CD8-positive, alpha-beta T cell (primary cell): ENCODE measurements at regions of chr19 and their contacts with region 1.

Region 1: DNA sequence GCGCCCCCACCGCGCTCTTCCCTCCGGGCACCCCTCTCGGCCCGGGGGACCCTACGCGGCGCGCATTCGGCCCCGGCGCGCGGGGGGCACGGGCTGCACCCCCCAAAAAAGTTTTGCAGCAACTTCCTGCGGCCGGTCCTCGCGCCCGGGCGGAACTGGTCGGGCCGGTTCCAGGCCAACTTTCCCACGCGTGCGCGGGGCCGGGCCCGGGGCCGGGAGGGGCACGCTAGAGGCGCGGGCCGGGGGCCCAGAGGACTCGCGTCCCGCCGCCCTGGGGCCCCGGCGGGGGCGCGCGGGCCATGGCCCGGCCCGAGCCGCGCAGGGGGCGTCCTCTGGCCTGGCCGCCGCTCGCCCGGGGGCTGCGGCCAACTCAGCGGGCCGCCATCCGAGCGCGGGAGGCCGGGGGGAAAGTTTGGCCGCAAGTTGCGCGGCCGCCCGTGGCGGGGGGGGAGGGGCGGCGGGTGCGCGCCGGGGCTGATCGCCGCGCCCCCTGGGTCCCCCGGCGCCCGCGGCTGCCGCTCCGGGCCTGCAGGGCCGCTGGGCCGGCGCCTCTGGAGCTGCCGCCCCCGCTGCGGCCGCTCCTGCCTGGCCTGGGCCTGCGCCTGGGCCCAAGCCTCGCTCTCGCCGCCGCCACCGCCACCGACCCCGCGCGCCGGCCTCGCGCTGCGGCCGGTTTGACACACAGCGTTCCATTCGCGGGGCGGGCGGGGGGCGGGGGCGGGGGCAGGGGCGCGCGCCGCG is at the start of gene NR2F6:
- DNase-seq: no peak
- ATAC-seq: peak; percentile 10
- H3K4me3 ChIP-seq: peak within 1 kb of the TSS; percentile 62 to 76
- H3K4me3 Mint-ChIP-seq: peak within 1 kb of the TSS; percentile 85
- H3K27ac ChIP-seq: no peak within 1 kb of the TSS
- H3K27ac Mint-ChIP-seq: peak within 1 kb of the TSS; percentile 41
- H3K4me1 ChIP-seq: peaks cover 9% of the 10 kb centered on the region
- H3K4me1 Mint-ChIP-seq: peaks cover 4% of the 10 kb centered on the region
- H3K27me3 ChIP-seq: no peaks in the 10 kb centered on the region
- H3K27me3 Mint-ChIP-seq: peaks cover 4% of the 10 kb centered on the region
- CTCF ChIP-seq: no peak
- total RNA-seq, gene NR2F6: 0.31 to 0.38 TPM

Region 2: DNA sequence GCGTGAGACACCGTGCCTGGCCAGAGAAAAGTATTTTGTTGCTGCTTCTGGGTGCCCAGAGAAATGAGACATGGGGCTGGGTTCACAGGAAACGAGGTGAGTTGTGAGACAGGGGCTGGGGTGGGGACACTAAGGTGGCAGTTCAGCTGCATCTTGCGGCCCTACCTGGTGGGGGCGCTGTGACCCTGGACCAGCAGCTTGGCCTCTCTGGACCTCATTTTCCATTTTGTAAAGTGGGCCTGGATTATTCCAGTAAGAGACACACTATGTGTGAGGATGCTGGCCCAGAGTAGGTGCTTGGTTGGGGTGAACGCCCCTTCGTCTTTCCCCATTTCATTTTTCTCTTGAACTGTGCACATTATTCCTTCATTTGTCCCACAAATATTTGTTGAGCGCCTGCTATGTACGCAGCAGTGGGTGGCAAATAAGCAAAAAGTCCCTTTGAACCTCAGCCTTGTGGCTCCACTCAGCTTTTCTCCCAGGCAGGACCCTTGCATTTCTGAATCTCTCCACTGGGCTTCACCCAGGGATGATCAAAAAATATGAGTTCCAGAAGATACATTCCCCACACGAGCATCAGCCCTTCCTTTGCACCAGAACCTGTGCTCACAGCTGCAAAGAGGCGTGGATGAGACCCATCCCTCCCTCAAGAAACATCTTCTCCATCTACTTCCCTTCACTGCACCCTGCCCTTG is 1403.4 kb before region 1 on chr19:
- CTCF ChIA-PET with region 1: no interaction called
- POLR2A ChIA-PET with region 1: no interaction called
- intact Hi-C with region 1: loop called in 1 of 2 experiments (anchors 5 kb)
- DNase-seq: peak in 3 of 9 experiments; percentile 13 to 31 (median 28)
- ATAC-seq: no peak
- H3K4me3 ChIP-seq: no peak overlapping the region
- H3K4me3 Mint-ChIP-seq: no peak overlapping the region
- H3K27ac ChIP-seq: no peak overlapping the region
- H3K27ac Mint-ChIP-seq: peak overlapping the region; percentile 46
- H3K4me1 ChIP-seq: peaks cover 41% of the 10 kb centered on the region
- H3K4me1 Mint-ChIP-seq: peaks cover 55% of the 10 kb centered on the region
- H3K27me3 ChIP-seq: no peaks in the 10 kb centered on the region
- H3K27me3 Mint-ChIP-seq: no peaks in the 10 kb centered on the region
- CTCF ChIP-seq: no peak

Region 3: DNA sequence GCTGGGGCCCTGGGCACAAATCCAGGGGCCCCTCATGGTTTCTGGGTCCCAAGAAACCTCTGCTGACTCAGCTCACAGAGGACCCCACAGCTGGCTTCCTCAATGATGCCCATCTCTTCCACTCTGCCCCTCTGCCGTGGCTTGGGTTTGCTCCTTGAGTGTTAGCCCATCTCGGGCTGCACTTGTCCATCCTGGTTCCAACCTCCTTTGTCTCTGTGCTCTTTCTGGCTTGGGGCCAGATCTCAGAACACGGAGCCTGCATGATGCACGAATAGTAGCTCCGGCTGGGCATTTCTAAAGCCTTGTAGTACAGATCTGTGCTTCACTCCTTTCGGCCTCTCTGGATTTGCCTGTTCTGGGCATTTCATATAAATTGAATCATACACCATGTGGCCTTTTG is 302.8 kb before region 1 on chr19:
- CTCF ChIA-PET with region 1: no interaction called
- POLR2A ChIA-PET with region 1: no interaction called
- intact Hi-C with region 1: no loop called
- DNase-seq: no peak
- ATAC-seq: no peak
- H3K4me3 ChIP-seq: no peak overlapping the region
- H3K4me3 Mint-ChIP-seq: no peak overlapping the region
- H3K27ac ChIP-seq: no peak overlapping the region
- H3K27ac Mint-ChIP-seq: no peak overlapping the region
- H3K4me1 ChIP-seq: no peaks in the 10 kb centered on the region
- H3K4me1 Mint-ChIP-seq: no peaks in the 10 kb centered on the region
- H3K27me3 ChIP-seq: no peaks in the 10 kb centered on the region
- H3K27me3 Mint-ChIP-seq: peaks cover 6% of the 10 kb centered on the region
- CTCF ChIP-seq: no peak

Region 4: GRCh38 chr19:17260842-17261325 is 15.5 kb after region 1 on chr19:
- CTCF ChIA-PET with region 1: interaction called, 26 read pairs
- POLR2A ChIA-PET with region 1: no interaction called
- intact Hi-C with region 1: no loop called
- DNase-seq: peak; percentile 81 to 95 (median 90)
- ATAC-seq: peak; percentile 100
- H3K4me3 ChIP-seq: no peak overlapping the region
- H3K4me3 Mint-ChIP-seq: no peak overlapping the region
- H3K27ac ChIP-seq: no peak overlapping the region
- H3K27ac Mint-ChIP-seq: no peak overlapping the region
- H3K4me1 ChIP-seq: peaks cover 12% of the 10 kb centered on the region
- H3K4me1 Mint-ChIP-seq: peaks cover 9% of the 10 kb centered on the region
- H3K27me3 ChIP-seq: no peaks in the 10 kb centered on the region
- H3K27me3 Mint-ChIP-seq: no peaks in the 10 kb centered on the region
- CTCF ChIP-seq: peak; percentile 69

Region 5: DNA sequence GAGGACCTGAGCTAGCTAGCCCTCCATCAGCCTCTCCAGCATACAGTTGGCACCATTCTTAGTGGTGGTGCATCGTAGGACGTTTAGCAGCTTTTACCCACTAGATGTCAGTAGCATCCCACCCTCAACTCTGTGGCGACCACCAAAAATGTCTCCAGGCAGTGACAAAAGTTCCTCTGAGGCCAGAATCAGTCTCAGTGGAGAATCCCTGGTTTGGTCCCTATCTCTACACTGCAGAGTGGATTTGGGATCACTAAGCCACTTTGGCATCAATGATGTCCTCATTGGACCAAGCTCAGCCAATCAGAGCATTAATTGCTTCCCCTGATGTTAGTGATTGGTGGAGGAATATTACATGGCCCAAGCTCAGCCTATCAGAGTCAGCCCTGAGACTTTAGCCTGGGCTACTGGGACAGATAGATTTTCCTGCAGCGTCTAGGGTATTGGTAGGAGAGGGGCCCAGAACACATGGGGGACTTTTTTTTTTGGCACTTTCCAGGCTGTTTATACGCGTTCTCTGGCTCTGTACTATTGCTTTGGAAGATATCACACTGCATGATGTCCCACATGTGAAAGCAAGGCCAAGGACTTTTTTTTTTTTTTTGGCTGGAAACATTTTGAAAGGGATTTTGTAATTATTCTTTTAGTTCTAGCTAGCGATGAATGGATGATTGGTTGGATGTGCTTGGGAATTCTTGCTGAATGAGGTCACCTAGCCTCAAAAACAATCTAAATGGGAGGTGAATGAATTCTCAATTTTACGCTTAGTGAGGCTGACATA is 196.0 kb after region 1 on chr19:
- CTCF ChIA-PET with region 1: no interaction called
- POLR2A ChIA-PET with region 1: no interaction called
- intact Hi-C with region 1: no loop called
- DNase-seq: peak in 5 of 9 experiments; percentile 21 to 64 (median 52)
- ATAC-seq: peak; percentile 69
- H3K4me3 ChIP-seq: no peak overlapping the region
- H3K4me3 Mint-ChIP-seq: no peak overlapping the region
- H3K27ac ChIP-seq: no peak overlapping the region
- H3K27ac Mint-ChIP-seq: no peak overlapping the region
- H3K4me1 ChIP-seq: no peaks in the 10 kb centered on the region
- H3K4me1 Mint-ChIP-seq: no peaks in the 10 kb centered on the region
- H3K27me3 ChIP-seq: no peaks in the 10 kb centered on the region
- H3K27me3 Mint-ChIP-seq: no peaks in the 10 kb centered on the region
- CTCF ChIP-seq: peak; percentile 33